Posterior cingulate gyrus (tissue), 11 donors: ENCODE measurements at regions of chr7 and their contacts with region 1.

Region 1: GRCh38 chr7:96855139-96855538 is 145.5 kb upstream of the SEM1 start:
- DNase-seq: no peak

Region 2: GRCh38 chr7:96061844-96062243 is 793.3 kb before region 1 on chr7:
- intact Hi-C with region 1: loop called (anchors 5 kb)
- DNase-seq: no peak

Region 3: DNA sequence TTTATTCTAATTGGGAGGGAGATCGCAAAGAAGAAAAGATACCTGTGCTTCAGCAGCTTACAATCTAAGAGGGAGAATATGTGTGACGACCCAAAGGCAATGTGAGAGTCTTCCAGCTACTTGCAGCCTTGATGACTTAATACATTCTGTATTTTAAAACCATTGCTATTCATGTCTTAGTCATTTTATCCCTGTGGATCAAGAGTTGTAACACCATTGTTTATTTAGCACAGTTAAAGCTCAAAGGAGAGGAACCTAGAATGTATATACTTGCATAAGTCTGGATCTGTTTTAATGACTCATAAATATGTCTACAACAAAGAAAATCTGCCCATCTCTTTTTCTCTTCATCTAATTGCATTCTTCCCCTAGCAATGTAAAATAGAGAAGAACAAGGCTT is 32.3 kb after region 1 on chr7:
- intact Hi-C with region 1: no loop called
- DNase-seq: no peak